A673 (cell line): ENCODE measurements at regions of chr2 and their contacts with region 1.

Region 1: GRCh38 chr2:199861132-199861774 is 10.3 kb upstream of the FTCDNL1 start:
- DNase-seq: peak; percentile 36
- H3K4me3 ChIP-seq: no peak overlapping the region
- H3K27ac ChIP-seq: no peak overlapping the region
- H3K4me1 ChIP-seq: peaks cover 5% of the 10 kb centered on the region
- H3K27me3 ChIP-seq: no peaks in the 10 kb centered on the region
- CTCF ChIP-seq: peak; percentile 78

Region 2: DNA sequence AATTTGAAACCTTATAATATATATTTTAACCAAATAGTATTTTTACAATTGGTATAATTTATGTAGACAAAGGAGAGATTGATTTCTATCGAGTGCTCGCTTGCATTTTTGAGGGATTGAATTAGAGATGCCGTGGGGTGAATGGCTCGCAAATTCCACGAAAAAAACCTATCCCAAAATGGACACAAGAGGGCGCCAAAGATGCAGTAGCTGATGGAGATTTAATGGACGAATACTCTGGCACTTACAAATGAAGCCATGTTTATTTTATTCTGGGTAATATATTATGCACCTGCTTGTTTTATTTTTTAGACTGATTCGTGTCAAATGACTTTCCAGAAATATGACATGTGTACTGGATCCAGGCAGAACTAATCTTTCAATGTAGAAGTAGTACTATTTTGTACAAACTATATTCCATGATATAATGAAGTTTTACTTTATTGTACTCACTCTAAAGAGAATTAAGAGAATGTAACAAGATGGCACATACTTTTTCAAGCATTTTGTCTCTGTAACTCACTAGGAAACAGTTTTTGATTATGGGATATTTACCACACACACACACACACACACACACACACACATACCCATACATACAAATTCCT is 1551.5 kb before region 1 on chr2:
- CTCF ChIA-PET with region 1: no interaction called
- POLR2A ChIA-PET with region 1: no interaction called
- intact Hi-C with region 1: loop called (anchors 5 kb)
- DNase-seq: peak; percentile 72
- H3K4me3 ChIP-seq: no peak overlapping the region
- H3K27ac ChIP-seq: no peak overlapping the region
- H3K4me1 ChIP-seq: peaks cover 4% of the 10 kb centered on the region
- H3K27me3 ChIP-seq: peaks cover 5% of the 10 kb centered on the region
- CTCF ChIP-seq: peak; percentile 88

Region 3: GRCh38 chr2:199136681-199137080 is 724.6 kb before region 1 on chr2:
- CTCF ChIA-PET with region 1: no interaction called
- POLR2A ChIA-PET with region 1: no interaction called
- intact Hi-C with region 1: no loop called
- DNase-seq: peak; percentile 57
- H3K4me3 ChIP-seq: no peak overlapping the region
- H3K27ac ChIP-seq: no peak overlapping the region
- H3K4me1 ChIP-seq: no peaks in the 10 kb centered on the region
- H3K27me3 ChIP-seq: no peaks in the 10 kb centered on the region
- CTCF ChIP-seq: no peak

Region 4: DNA sequence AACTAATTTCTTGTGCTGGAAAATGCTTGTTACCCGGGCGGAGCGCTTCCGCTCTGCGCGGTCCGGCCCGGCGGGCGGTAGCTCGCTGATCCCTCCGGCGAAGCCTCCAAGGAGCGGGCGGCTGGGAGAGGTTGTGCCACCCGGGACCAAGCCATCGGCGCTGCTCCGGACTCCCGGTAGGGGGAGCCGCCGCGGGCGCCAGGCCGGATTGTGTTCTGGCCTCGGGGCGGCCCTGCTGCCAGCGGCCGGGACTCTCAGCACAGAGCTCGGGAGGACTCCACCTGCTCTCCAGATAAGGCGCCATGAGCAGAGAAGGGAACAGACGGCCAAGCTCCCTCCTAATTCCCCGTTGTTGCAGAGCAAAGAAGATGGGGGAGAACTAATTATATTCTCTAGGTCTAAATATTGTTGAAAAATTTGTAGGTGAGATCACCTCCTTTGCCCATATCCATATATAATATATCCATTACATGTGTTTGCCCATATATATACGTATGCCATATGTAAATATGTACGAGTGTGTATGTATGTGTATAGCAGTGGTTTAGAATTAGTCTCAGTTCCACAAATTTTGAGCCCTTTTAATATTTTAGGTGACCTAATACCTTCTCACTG is 389.7 kb before region 1 on chr2:
- CTCF ChIA-PET with region 1: no interaction called
- POLR2A ChIA-PET with region 1: no interaction called
- intact Hi-C with region 1: loop called (anchors 10 kb)
- DNase-seq: peak; percentile 73
- H3K4me3 ChIP-seq: peak overlapping the region; percentile 42
- H3K27ac ChIP-seq: no peak overlapping the region
- H3K4me1 ChIP-seq: peaks cover 3% of the 10 kb centered on the region
- H3K27me3 ChIP-seq: peaks cover 21% of the 10 kb centered on the region
- CTCF ChIP-seq: peak; percentile 87

Region 5: GRCh38 chr2:199602271-199602895 is 258.9 kb before region 1 on chr2:
- CTCF ChIA-PET with region 1: no interaction called
- POLR2A ChIA-PET with region 1: no interaction called
- intact Hi-C with region 1: loop called (anchors 5 kb)
- DNase-seq: peak; percentile 86
- H3K4me3 ChIP-seq: no peak overlapping the region
- H3K27ac ChIP-seq: peak overlapping the region; percentile 76
- H3K4me1 ChIP-seq: peaks cover 33% of the 10 kb centered on the region
- H3K27me3 ChIP-seq: no peaks in the 10 kb centered on the region
- CTCF ChIP-seq: peak; percentile 54

Region 6: GRCh38 chr2:199659207-199659606 is 202.0 kb before region 1 on chr2:
- CTCF ChIA-PET with region 1: no interaction called
- POLR2A ChIA-PET with region 1: no interaction called
- intact Hi-C with region 1: no loop called
- DNase-seq: peak; percentile 76
- H3K4me3 ChIP-seq: peak overlapping the region; percentile 26
- H3K27ac ChIP-seq: no peak overlapping the region
- H3K4me1 ChIP-seq: peaks cover 23% of the 10 kb centered on the region
- H3K27me3 ChIP-seq: no peaks in the 10 kb centered on the region
- CTCF ChIP-seq: no peak

Region 7: GRCh38 chr2:199704358-199705238 is 156.7 kb before region 1 on chr2:
- CTCF ChIA-PET with region 1: no interaction called
- POLR2A ChIA-PET with region 1: no interaction called
- intact Hi-C with region 1: loop called (anchors 2 kb)
- DNase-seq: peak; percentile 54
- H3K4me3 ChIP-seq: no peak overlapping the region
- H3K27ac ChIP-seq: no peak overlapping the region
- H3K4me1 ChIP-seq: no peaks in the 10 kb centered on the region
- H3K27me3 ChIP-seq: no peaks in the 10 kb centered on the region
- CTCF ChIP-seq: peak; percentile 76